ENCODE measurements at regions of chr4 and their contacts with region 1.

Region 1: DNA sequence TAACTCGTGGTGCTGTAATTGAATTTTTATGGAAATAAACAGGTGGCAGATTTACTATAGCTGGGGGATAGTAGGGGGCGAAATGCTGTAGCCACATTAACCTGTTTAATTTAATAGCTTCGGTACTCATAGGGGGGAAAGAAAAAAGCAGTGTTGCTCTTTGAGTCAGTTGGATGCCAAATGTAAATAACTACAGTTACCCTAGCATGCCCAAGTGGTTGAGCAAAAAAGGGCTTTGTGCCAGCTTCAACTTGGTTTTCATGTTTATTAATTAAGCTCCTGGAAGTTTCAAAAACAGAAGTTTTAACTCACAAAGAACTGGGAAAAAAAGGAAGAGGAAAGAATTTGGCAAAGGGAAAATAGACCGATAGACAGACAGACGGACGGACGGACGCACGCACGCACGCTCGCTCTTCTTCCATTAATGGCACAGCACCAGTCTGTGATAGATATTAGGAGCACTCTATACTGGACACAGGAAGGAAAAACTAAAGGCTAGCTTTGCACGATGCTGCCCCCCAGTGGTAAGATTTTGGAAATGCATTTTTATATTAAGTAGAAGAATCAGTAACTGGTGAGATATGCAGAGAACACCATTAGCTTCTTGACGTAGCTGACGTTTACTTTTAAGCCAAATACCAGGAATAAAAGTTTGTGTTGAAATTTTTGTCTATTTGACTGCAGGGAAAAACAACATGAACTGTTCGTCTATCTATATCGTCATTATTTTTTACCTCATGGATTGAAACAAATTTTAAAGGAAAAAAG is 151.8 kb downstream of the SLC7A11 start:
- DNase-seq: no peak
- H3K4me3 ChIP-seq: peak overlapping the region; percentile 38
- CTCF ChIP-seq: peak; percentile 45

Region 2: GRCh38 chr4:137819964-137820383 is 270.4 kb before region 1 on chr4:
- CTCF ChIA-PET with region 1: interaction called, 66 read pairs
- POLR2A ChIA-PET with region 1: no interaction called
- DNase-seq: no peak
- H3K4me3 ChIP-seq: no peak overlapping the region
- CTCF ChIP-seq: peak; percentile 50

Region 3: GRCh38 chr4:138030375-138030774 is 60.0 kb before region 1 on chr4:
- CTCF ChIA-PET with region 1: interaction called, 235 read pairs
- POLR2A ChIA-PET with region 1: interaction called, 3 read pairs
- DNase-seq: no peak
- H3K4me3 ChIP-seq: no peak overlapping the region
- CTCF ChIP-seq: no peak

Region 4: DNA sequence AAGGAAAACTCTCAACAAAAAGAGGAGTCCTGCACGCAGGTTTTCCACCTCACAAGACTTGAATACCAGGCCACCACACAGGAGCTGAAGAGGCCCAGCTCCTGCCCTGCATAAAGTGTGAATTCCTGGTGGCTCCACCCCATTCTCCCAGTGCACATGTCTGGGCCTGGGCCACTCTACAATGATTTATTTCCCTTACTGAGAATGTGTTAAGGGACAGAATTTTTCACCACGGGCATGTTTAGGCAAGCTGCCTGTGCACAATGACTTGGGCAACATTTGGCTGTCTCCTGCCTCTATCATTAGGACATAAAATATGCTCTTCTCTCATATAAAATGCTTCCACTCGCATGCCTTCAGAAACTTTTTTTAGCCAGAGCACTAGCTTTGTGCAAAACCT is 45.3 kb before region 1 on chr4:
- CTCF ChIA-PET with region 1: interaction called, 235 read pairs
- POLR2A ChIA-PET with region 1: no interaction called
- DNase-seq: no peak
- H3K4me3 ChIP-seq: no peak overlapping the region
- CTCF ChIP-seq: no peak

Region 5: GRCh38 chr4:138062929-138063328 is 27.4 kb before region 1 on chr4:
- CTCF ChIA-PET with region 1: interaction called, 12 read pairs
- POLR2A ChIA-PET with region 1: no interaction called
- DNase-seq: no peak
- H3K4me3 ChIP-seq: no peak overlapping the region
- CTCF ChIP-seq: peak; percentile 26

Region 6: DNA sequence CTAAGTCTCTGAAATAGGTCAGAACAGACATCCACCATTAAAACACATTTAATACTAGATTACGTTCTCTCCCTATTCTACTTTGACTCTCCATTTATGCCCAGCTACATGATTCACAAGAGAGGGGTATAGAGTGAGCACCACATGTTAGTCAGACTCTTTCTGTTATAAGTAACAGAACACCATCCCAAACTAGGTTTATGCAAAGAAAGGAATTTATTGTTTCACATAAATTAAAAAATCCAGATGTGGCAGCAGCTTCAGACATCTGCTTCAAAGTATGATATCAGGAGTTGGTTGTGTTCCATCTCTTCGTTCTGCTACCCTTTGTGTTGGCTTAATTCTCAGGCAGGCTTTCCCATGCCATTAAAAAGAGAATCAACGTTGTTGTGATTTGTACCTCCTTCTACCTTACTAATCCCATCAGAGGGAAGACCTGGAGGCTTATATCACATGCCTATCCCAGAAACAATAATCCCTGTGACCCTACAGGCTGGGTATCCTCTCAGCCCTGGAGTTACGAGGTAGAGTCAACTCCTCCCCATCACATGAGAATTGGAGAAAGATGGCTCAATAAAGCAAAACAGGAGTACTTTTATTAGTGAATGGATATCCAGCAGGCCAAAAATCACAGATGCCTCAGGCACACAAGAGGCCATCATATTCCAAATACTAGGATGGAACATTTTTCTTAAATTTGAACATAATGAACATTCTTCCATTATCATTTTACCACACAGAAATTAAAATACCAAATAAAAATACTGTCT is 11.4 kb before region 1 on chr4:
- CTCF ChIA-PET with region 1: interaction called, 42 read pairs
- POLR2A ChIA-PET with region 1: no interaction called
- DNase-seq: no peak
- H3K4me3 ChIP-seq: no peak overlapping the region
- CTCF ChIP-seq: no peak

Region 7: GRCh38 chr4:138111456-138112000 is 21.2 kb after region 1 on chr4:
- CTCF ChIA-PET with region 1: interaction called, 13 read pairs
- POLR2A ChIA-PET with region 1: no interaction called
- DNase-seq: no peak
- H3K4me3 ChIP-seq: no peak overlapping the region
- CTCF ChIP-seq: no peak